Ascending aorta (tissue), 2 donors: ENCODE measurements at regions of chr7 and their contacts with region 1.

Region 1: GRCh38 chr7:47482013-47482875 is 99.7 kb downstream of the TNS3 start:
- DNase-seq: peak; percentile 56 to 87
- H3K4me3 ChIP-seq: peak overlapping the region in 1 of 2 donors; percentile 37
- H3K27ac ChIP-seq: peak overlapping the region; percentile 82 to 85
- H3K4me1 ChIP-seq: peaks cover 19 to 66% of the 10 kb centered on the region in 2 donors
- H3K27me3 ChIP-seq: no peaks in the 10 kb centered on the region
- CTCF ChIP-seq: no peak

Region 2: DNA sequence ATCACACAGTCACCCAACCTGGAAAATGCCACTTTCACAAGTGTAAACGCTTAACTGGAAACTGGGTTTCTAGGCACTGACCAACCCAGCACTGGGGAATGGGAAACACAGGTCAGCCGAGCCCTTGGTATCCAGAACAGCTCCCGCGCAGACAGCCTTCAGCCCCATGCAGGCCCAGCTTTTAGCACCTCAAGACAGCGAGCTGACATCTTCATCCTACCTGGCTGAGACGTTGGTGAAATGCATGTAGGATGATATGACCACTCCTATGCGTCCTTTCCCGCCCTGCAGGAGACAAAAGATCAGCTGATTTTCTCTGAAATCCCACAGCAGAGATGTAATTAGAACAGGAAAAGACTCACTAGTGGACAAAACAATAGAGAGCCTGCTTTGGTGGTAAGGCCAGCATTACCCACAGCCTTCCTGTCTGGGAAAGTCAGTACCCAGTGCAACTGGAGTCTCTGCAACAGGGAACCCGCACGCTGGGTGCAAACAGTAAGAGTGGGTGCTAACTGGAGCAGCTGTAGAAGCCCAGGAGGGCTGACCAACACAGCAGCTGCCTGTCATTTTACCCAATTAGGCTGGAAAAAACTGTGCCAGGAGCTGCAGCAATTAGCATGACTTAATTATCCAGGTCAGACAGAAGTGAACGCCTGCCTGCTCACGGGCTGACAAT is 54.0 kb before region 1 on chr7:
- intact Hi-C with region 1: no loop called
- DNase-seq: no peak
- H3K4me3 ChIP-seq: no peak overlapping the region
- H3K27ac ChIP-seq: peak overlapping the region; percentile 31 to 40
- H3K4me1 ChIP-seq: peaks cover 4 to 7% of the 10 kb centered on the region in 2 donors
- H3K27me3 ChIP-seq: no peaks in the 10 kb centered on the region
- CTCF ChIP-seq: no peak

Region 3: GRCh38 chr7:47441796-47442604 is 40.2 kb before region 1 on chr7:
- intact Hi-C with region 1: no loop called
- DNase-seq: no peak
- H3K4me3 ChIP-seq: no peak overlapping the region
- H3K27ac ChIP-seq: no peak overlapping the region
- H3K4me1 ChIP-seq: peaks cover 0 to 8% of the 10 kb centered on the region in 2 donors
- H3K27me3 ChIP-seq: no peaks in the 10 kb centered on the region
- CTCF ChIP-seq: no peak

Region 4: GRCh38 chr7:47453093-47454049 is 28.9 kb before region 1 on chr7:
- intact Hi-C with region 1: loop called (anchors 1 kb)
- DNase-seq: peak; percentile 80 to 92
- H3K4me3 ChIP-seq: peak overlapping the region; percentile 20 to 58
- H3K27ac ChIP-seq: peak overlapping the region; percentile 86 to 89
- H3K4me1 ChIP-seq: peaks cover 22 to 36% of the 10 kb centered on the region in 2 donors
- H3K27me3 ChIP-seq: no peaks in the 10 kb centered on the region
- CTCF ChIP-seq: no peak

Region 5: GRCh38 chr7:47506382-47507339 is 24.4 kb after region 1 on chr7:
- intact Hi-C with region 1: loop called (anchors 2 kb)
- DNase-seq: no peak
- H3K4me3 ChIP-seq: no peak overlapping the region
- H3K27ac ChIP-seq: no peak overlapping the region
- H3K4me1 ChIP-seq: peaks cover 13 to 37% of the 10 kb centered on the region in 2 donors
- H3K27me3 ChIP-seq: no peaks in the 10 kb centered on the region
- CTCF ChIP-seq: peak in 1 of 3 experiments; percentile 17

Region 6: GRCh38 chr7:47520406-47520805 is 38.2 kb after region 1 on chr7:
- intact Hi-C with region 1: loop called (anchors 5 kb)
- DNase-seq: peak in 1 of 2 donors; percentile 88
- H3K4me3 ChIP-seq: no peak overlapping the region
- H3K27ac ChIP-seq: peak overlapping the region; percentile 76 to 88
- H3K4me1 ChIP-seq: peaks cover 8 to 39% of the 10 kb centered on the region in 2 donors
- H3K27me3 ChIP-seq: no peaks in the 10 kb centered on the region
- CTCF ChIP-seq: no peak

Region 7: GRCh38 chr7:47702080-47702479 is 219.8 kb after region 1 on chr7:
- intact Hi-C with region 1: no loop called
- DNase-seq: no peak
- H3K4me3 ChIP-seq: no peak overlapping the region
- H3K27ac ChIP-seq: no peak overlapping the region
- H3K4me1 ChIP-seq: no peaks in the 10 kb centered on the region
- H3K27me3 ChIP-seq: no peaks in the 10 kb centered on the region
- CTCF ChIP-seq: no peak